HEK293 (cell line): ENCODE measurements at regions of chr15 and their contacts with region 1.

Region 1: GRCh38 chr15:74763416-74763815 is 14.8 kb downstream of the CYP1A2 start:
- H3K4me3 ChIP-seq: no peak overlapping the region
- H3K27ac ChIP-seq: no peak overlapping the region
- H3K4me1 ChIP-seq: no peaks in the 10 kb centered on the region
- CTCF ChIP-seq: no peak

Region 2: GRCh38 chr15:74725845-74726773 is 37.3 kb before region 1 on chr15:
- CTCF ChIA-PET with region 1: interaction called, 11 read pairs
- POLR2A ChIA-PET with region 1: interaction called, 11 read pairs
- H3K4me3 ChIP-seq: peak overlapping the region; percentile 48
- H3K27ac ChIP-seq: peak overlapping the region; percentile 61; the same call in 1 of the 2 replicates
- H3K4me1 ChIP-seq: no peaks in the 10 kb centered on the region; the same call in 1 of the 2 replicates
- CTCF ChIP-seq: peak; percentile 78; the same call in 1 of the 2 replicates

Region 3: DNA sequence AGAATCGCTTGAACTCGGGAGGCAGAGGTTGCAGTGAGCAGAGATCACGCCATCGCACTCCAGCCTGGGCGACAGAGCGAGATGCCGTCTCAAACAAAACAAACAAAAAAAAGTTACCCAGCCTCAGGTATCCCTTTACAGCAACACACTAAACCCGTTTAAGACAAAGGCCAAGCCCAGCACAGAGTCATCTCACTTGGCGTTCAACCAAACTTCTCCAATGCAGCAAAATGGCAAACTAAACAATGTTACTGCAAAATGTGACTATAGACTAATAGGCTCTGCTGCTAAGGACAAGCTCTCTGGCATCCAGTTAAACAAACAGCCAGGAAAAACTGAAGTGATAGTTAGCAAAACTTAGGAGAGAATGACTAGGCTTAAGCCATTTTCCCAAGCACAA is 149.6 kb after region 1 on chr15:
- CTCF ChIA-PET with region 1: no interaction called
- POLR2A ChIA-PET with region 1: no interaction called
- H3K4me3 ChIP-seq: no peak overlapping the region
- H3K27ac ChIP-seq: no peak overlapping the region
- H3K4me1 ChIP-seq: no peaks in the 10 kb centered on the region
- CTCF ChIP-seq: no peak